ENCODE measurements at regions of chr16 and their contacts with region 1.

Region 1: DNA sequence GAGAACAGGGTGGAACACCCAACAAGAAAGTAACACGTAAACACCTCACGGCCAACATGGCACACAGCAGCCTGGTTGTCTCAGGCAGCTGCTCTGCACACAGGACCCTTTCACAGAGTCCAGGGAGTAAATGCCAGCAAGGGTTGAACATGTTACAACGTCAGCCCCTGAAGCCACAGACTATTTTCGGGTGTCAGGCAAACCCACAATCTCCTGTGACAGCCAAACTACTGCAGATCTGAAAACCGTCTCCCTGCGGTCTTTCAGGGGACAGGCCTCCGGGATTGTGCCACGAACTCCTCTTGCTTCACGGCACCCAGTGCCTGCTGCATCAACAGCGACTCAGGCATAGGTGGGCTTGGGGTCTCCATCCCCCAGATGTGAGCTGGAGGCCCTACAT is 127.7 kb downstream of the XYLT1 start:
- DNase-seq: peak; percentile 64
- ATAC-seq: peak; percentile 48
- H3K4me3 Mint-ChIP-seq: peak overlapping the region; percentile 73
- H3K27ac Mint-ChIP-seq: peak overlapping the region; percentile 96
- H3K4me1 Mint-ChIP-seq: peaks cover 82% of the 10 kb centered on the region
- H3K27me3 Mint-ChIP-seq: no peaks in the 10 kb centered on the region

Region 2: DNA sequence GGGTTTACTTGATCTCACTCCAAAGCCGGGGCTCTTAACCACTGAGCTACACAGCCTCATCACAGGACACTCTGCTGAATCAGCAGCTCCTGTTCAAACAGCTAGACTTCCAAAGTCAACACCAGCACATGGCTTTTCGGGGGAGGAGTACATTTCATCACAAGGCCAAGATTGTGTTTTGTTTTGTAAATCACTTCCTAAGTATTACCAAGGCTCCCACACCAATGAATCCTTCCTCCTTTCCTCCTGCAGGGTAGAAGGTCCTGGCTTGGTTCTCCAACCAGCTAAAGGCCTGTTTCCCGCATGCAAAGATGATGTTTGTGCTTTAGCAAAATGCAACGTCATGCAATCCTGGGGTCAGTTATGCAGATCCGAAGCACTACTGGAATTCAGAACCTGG is 24.8 kb before region 1 on chr16:
- POLR2A ChIA-PET with region 1: no interaction called
- DNase-seq: no peak
- ATAC-seq: no peak
- H3K4me3 Mint-ChIP-seq: no peak overlapping the region
- H3K27ac Mint-ChIP-seq: no peak overlapping the region
- H3K4me1 Mint-ChIP-seq: peaks cover 35% of the 10 kb centered on the region
- H3K27me3 Mint-ChIP-seq: no peaks in the 10 kb centered on the region

Region 3: GRCh38 chr16:17359788-17360390 is 16.9 kb after region 1 on chr16:
- POLR2A ChIA-PET with region 1: interaction called, 216 read pairs
- DNase-seq: no peak
- ATAC-seq: peak; percentile 58
- H3K4me3 Mint-ChIP-seq: peak overlapping the region; percentile 65
- H3K27ac Mint-ChIP-seq: peak overlapping the region; percentile 86
- H3K4me1 Mint-ChIP-seq: peaks cover 62% of the 10 kb centered on the region
- H3K27me3 Mint-ChIP-seq: no peaks in the 10 kb centered on the region

Region 4: GRCh38 chr16:17416461-17417311 is 73.7 kb after region 1 on chr16:
- POLR2A ChIA-PET with region 1: interaction called, 14 read pairs
- DNase-seq: peak; percentile 58
- ATAC-seq: peak; percentile 93
- H3K4me3 Mint-ChIP-seq: peak overlapping the region; percentile 81
- H3K27ac Mint-ChIP-seq: peak overlapping the region; percentile 94
- H3K4me1 Mint-ChIP-seq: peaks cover 45% of the 10 kb centered on the region
- H3K27me3 Mint-ChIP-seq: no peaks in the 10 kb centered on the region

Region 5: GRCh38 chr16:17467923-17468540 is 125.0 kb after region 1 on chr16:
- POLR2A ChIA-PET with region 1: interaction called, 20 read pairs
- DNase-seq: peak; percentile 50
- ATAC-seq: peak; percentile 48
- H3K4me3 Mint-ChIP-seq: peak overlapping the region; percentile 93
- H3K27ac Mint-ChIP-seq: peak overlapping the region; percentile 32
- H3K4me1 Mint-ChIP-seq: peaks cover 40% of the 10 kb centered on the region
- H3K27me3 Mint-ChIP-seq: no peaks in the 10 kb centered on the region

Measured in activated naive CD8-positive, alpha-beta T cell treated with anti-CD3 and anti-CD28 coated beads, Interleukin-2, amount 10 ng/mL, durations not matched to agents 7 days and 5 days (primary cell).